A673 (cell line): ENCODE measurements at regions of chr9 and their contacts with region 1.

Region 1: DNA sequence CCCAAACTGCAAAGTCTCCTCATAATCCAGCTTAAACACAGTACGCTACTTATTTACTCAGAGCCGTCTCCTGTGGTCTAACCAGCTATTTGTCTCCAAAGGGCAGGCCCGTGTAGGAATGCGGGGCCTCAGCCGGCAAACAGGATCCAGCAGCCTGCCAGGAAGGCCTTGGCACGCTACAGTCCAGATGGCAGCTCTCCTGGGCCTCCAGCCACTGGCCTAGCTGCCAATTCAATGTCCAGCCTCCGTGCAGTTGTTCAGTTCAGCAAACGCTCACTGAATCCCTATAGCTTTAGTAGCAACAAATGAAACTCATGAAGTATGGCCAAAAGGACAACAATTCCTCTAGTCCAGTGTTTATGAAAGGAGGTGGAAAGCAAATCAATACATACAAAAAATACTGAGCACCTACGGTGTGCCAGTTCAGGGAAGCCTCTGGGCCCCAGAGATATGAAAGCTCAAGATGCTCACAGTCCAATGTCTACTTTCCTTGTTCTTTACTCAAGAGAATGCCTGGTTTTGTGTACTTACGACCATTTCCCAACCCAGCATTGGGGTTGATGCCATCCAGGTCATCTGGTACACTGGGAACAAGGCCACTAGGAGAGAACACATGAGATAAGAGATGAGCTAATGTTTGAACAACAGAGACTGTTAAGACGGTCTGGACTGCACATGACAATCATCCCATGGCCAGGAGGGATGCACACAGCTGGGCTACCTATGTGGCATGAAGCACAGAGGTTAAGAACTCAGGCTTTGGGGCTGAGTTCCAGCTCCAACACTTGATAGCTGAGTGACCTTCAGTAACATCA is 8.3 kb downstream of the CDK5RAP2 start:
- DNase-seq: no peak
- H3K4me3 ChIP-seq: no peak overlapping the region
- H3K27ac ChIP-seq: no peak overlapping the region
- H3K4me1 ChIP-seq: no peaks in the 10 kb centered on the region
- H3K27me3 ChIP-seq: no peaks in the 10 kb centered on the region
- CTCF ChIP-seq: no peak

Region 2: DNA sequence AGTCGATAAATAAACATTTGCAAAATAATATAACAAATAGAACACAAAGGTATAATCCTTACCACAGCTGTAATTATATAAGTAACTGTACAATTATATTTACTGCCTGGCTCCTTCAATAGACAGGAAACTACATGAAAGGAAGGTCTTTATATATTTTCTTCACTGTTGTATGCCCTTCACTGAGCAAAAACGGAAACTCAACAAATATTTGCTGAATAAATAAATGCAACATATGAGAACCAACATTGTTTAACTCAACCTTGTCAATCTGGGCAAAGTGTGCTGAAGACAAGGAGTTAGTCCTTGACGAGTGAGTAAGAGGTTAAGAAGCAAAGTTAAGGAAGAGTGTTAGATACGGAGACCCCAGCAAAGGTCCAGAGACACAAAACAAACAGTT is 248.4 kb after region 1 on chr9:
- CTCF ChIA-PET with region 1: no interaction called
- POLR2A ChIA-PET with region 1: no interaction called
- intact Hi-C with region 1: no loop called
- DNase-seq: no peak
- H3K4me3 ChIP-seq: no peak overlapping the region
- H3K27ac ChIP-seq: no peak overlapping the region
- H3K4me1 ChIP-seq: no peaks in the 10 kb centered on the region
- H3K27me3 ChIP-seq: no peaks in the 10 kb centered on the region
- CTCF ChIP-seq: no peak

Region 3: DNA sequence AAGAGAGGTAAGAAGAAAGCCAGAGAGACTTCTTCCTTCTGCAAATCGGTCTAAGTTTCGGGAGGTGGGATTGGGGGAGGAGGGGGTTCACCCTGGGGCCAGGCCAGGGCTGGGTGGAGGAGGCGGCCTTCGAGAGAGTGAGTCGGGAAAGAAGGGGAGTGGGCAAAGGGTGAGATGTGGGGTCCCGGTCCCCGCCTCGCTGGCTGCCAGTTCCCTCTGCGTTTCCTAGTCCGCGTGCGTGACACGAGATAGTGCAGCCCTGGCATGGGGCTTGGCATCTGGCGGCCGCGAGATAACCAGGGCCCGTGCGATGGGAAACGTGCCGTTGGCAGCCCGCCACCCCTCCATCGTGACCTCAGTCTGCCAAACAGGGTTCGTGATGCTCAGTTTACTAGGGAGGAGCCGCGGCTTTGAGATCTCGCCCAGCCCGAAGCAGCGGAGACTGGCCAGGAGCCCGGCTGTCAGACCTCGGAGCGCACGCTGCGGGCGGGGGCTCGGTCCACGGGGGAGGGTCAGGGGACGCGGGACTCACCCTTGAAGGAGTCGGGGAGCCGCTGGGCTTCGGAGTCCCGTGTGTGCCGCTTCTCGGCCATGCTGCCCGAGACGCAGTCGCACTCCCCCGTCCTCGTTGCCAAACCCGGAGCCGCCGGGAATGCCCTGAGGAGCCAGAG is 798.1 kb after region 1 on chr9 and contains the start of gene STOM:
- CTCF ChIA-PET with region 1: no interaction called
- POLR2A ChIA-PET with region 1: interaction called, 17 read pairs
- intact Hi-C with region 1: no loop called
- DNase-seq: peak; percentile 78
- H3K4me3 ChIP-seq: peak within 1 kb of the TSS; percentile 66
- H3K27ac ChIP-seq: peak within 1 kb of the TSS; percentile 84
- H3K4me1 ChIP-seq: peaks cover 51% of the 10 kb centered on the region
- H3K27me3 ChIP-seq: no peaks in the 10 kb centered on the region
- CTCF ChIP-seq: no peak
- total RNA-seq, gene STOM: 63.4 and 72.4 TPM in 2 replicates